IMR-90 (cell line): ENCODE measurements at regions of chr12 and their contacts with region 1.

Region 1: DNA sequence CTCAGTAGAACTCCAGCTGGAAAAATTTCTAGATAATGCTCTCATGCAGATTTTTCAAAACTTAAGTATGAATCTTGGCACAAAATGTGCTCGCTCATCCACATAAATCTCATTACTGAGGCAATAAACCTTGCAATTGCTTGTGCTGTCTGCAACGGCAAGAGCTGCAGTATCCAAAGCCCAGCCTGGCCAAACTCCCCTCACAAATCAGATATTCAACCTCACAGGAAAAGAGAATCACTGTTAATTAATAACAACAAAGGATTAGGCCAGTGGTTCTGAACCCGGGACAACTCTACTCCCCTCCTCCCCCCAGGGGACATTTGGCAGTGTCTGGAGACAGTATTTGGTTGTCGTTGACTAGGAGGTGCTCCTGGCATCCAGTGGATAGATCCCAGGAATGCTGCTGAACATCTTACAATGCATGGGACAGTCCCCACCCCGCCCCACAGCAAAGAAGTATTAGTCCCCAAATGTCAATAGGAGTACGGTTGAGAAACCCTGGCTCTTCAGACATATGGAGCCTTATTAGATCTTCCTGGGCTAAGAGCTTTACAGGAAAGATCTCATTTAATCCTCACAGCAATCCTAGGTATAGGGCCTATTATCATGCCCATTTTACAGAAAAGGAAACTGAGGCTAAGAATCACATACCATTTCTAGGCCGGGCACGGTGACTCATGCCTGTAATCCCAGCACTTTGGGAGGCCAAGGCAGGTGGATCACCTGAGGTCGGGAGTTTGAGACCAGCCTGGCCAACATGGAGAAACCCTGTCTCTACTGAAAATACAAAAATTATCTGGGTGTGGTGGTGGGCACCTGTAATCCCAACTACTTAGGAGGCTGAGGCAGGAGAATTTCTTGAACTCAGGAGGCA is 19.4 kb upstream of the CORO1C start:
- DNase-seq: no peak
- ATAC-seq: no peak
- H3K4me3 ChIP-seq: no peak overlapping the region
- H3K27ac ChIP-seq: no peak overlapping the region
- H3K4me1 ChIP-seq: peaks cover 2% of the 10 kb centered on the region; the same call in 1 of the 2 replicates
- H3K27me3 ChIP-seq: no peaks in the 10 kb centered on the region
- CTCF ChIP-seq: no peak
- POLR2A ChIP-seq: no peak
- RAD21 ChIP-seq: no peak

Region 2: DNA sequence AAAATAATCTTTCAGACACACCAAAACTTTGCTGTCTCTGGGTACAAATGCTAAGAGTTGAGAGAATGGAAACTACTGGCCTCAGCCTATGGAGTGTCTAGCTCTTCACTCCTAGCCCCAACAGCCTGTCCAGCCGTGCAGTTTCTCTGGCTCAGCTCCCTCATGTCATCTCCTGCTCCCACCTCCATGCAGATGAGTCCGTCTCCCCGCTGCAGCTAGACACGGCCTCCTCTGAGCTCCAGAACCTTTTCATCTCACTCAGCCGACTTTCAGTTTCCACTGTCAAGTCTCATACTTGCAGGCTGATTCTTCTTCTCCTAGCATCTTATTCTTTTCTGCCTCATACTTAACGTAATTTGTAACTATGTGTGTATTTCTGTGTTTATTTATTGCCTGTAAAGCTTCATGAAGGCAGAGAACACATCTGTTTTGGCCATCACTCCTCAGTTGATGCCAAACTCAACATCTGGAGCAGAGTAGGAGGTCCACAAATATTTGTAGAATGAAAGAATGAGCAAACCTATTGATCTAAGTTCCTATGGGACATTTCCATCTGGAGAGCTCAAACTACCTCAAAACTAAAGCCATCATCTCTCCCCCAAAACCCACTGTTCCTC is 1204.9 kb before region 1 on chr12:
- CTCF ChIA-PET with region 1: no interaction called
- POLR2A ChIA-PET with region 1: interaction called, 11 read pairs
- dilution Hi-C with region 1: no loop called
- in situ Hi-C with region 1: no loop called
- intact Hi-C with region 1: no loop called
- DNase-seq: peak; percentile 37
- ATAC-seq: peak; percentile 63
- H3K4me3 ChIP-seq: no peak overlapping the region
- H3K27ac ChIP-seq: no peak overlapping the region
- H3K4me1 ChIP-seq: no peaks in the 10 kb centered on the region
- H3K27me3 ChIP-seq: no peaks in the 10 kb centered on the region
- CTCF ChIP-seq: no peak
- POLR2A ChIP-seq: no peak
- RAD21 ChIP-seq: no peak

Region 3: GRCh38 chr12:108477055-108477880 is 273.5 kb before region 1 on chr12:
- CTCF ChIA-PET with region 1: no interaction called
- POLR2A ChIA-PET with region 1: no interaction called
- dilution Hi-C with region 1: no loop called
- in situ Hi-C with region 1: no loop called
- intact Hi-C with region 1: no loop called
- DNase-seq: no peak
- ATAC-seq: no peak
- H3K4me3 ChIP-seq: no peak overlapping the region
- H3K27ac ChIP-seq: no peak overlapping the region
- H3K4me1 ChIP-seq: no peaks in the 10 kb centered on the region
- H3K27me3 ChIP-seq: no peaks in the 10 kb centered on the region
- CTCF ChIP-seq: no peak
- POLR2A ChIP-seq: no peak
- RAD21 ChIP-seq: no peak

Region 4: GRCh38 chr12:108649669-108650068 is 101.1 kb before region 1 on chr12:
- CTCF ChIA-PET with region 1: no interaction called
- POLR2A ChIA-PET with region 1: interaction called, 10 read pairs
- dilution Hi-C with region 1: no loop called
- in situ Hi-C with region 1: no loop called
- intact Hi-C with region 1: no loop called
- DNase-seq: peak; percentile 94
- ATAC-seq: peak; percentile 73
- H3K4me3 ChIP-seq: no peak overlapping the region
- H3K27ac ChIP-seq: peak overlapping the region; percentile 28; the same call in 1 of the 2 replicates
- H3K4me1 ChIP-seq: peaks cover 31% of the 10 kb centered on the region
- H3K27me3 ChIP-seq: no peaks in the 10 kb centered on the region
- CTCF ChIP-seq: no peak
- POLR2A ChIP-seq: no peak
- RAD21 ChIP-seq: no peak

Region 5: DNA sequence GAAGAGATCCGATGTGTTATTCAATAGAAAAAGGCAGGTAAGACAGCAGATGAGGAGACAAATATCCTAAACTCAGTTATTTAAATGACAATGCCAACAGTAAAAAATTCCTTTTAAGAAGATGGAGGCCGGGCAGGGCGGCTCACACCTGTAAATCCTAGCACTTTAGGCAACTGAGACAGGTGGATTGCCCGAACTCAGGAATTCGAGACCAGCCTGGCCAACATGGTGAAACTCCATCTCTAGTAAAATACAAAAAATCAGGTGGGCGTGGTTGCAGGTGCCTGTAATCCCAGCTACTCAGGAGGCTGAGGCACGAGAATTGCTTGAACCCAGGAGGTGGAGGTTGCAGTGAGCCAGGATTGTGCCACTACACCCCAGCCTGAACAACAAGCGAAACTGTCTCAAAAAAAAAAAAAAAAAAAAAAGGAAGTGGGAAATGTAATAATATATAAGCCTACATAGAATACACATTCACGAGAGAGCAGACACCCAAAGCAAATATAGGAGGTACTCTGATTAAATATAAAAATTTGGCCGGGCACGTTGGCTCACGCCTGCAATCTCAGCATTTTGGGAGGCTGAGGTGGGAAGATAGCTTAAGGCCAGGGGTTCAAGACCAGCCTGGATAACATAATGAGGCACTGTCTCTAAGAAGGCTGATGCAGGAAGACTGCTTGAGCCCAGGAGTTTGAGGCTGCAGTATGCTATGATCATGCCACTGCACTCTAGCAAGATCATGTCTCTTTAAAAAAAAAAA is 38.4 kb before region 1 on chr12:
- CTCF ChIA-PET with region 1: no interaction called
- POLR2A ChIA-PET with region 1: no interaction called
- dilution Hi-C with region 1: no loop called
- in situ Hi-C with region 1: no loop called
- intact Hi-C with region 1: no loop called
- DNase-seq: no peak
- ATAC-seq: 0 out of 2 replicates have a peak, but pooled peaks have one; percentile 5
- H3K4me3 ChIP-seq: no peak overlapping the region
- H3K27ac ChIP-seq: peak overlapping the region; percentile 52; the same call in 1 of the 2 replicates
- H3K4me1 ChIP-seq: peaks cover 20% of the 10 kb centered on the region
- H3K27me3 ChIP-seq: no peaks in the 10 kb centered on the region
- CTCF ChIP-seq: no peak
- POLR2A ChIP-seq: no peak
- RAD21 ChIP-seq: no peak